ENCODE measurements at regions of chr15 and their contacts with region 1.

Region 1: DNA sequence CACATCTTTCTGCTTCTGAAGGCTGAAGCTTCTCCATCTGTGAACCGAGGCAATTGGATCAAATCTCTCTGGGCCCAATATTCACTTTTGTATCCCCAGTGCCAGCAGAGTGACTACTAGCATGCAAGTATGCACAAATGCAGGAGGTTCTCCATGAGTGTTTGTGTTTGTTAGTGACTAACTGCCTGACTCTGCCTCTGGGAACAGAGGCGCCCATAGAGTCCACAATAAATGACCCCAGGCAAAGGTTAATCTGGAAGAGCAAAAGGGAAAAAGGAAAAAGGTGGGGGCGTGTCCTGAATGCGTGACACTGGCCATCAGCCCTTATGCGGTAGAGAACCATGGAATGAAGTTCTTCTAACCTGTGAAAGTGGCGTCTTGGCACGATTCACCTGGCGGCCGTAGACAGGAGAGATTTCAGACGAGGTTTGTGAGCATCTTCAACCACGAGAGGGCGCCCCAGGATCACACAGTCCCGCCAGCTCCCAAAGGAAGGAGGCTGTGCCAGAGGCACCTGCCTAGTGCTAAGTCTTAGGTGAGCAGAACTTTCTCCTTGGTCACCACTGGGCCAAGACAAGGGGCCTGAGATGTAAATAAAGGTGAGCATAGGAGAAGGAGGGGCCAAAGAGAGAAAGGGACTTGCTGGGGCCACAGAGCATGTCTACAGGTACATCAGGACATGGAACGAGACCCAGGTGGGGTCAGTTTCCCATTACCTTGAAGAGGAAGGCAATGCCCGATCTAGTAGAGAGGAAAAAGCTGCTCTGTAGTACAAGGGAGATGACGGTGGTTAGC is 44.2 kb downstream of the RBPMS2 start:
- DNase-seq: peak; percentile 65 to 86 (median 77)
- ATAC-seq: peak; percentile 87
- H3K4me3 ChIP-seq: no peak overlapping the region
- H3K4me3 Mint-ChIP-seq: peak overlapping the region in 2 of 10 donors; percentile 4 to 46
- H3K27ac ChIP-seq: no peak overlapping the region
- H3K27ac Mint-ChIP-seq: peak overlapping the region in 1 of 9 donors; percentile 57
- H3K4me1 ChIP-seq: no peaks in the 10 kb centered on the region
- H3K4me1 Mint-ChIP-seq: peaks cover 8 to 12% (median 10%) of the 10 kb centered on the region in 7 donors
- H3K27me3 ChIP-seq: no peaks in the 10 kb centered on the region
- H3K27me3 Mint-ChIP-seq: peaks cover 0 to 5% (median 4%) of the 10 kb centered on the region in 5 donors

Region 2: GRCh38 chr15:64209680-64210334 is 521.4 kb before region 1 on chr15:
- CTCF ChIA-PET with region 1: no interaction called
- POLR2A ChIA-PET with region 1: no interaction called
- intact Hi-C with region 1: loop called in 1 of 2 experiments (anchors 1 kb)
- DNase-seq: peak in 3 of 9 donors; percentile 0 to 19 (median 11)
- ATAC-seq: no peak
- H3K4me3 ChIP-seq: no peak overlapping the region
- H3K4me3 Mint-ChIP-seq: no peak overlapping the region
- H3K27ac ChIP-seq: no peak overlapping the region
- H3K27ac Mint-ChIP-seq: peak overlapping the region in 1 of 9 donors; percentile 41
- H3K4me1 ChIP-seq: no peaks in the 10 kb centered on the region
- H3K4me1 Mint-ChIP-seq: peaks cover 0 to 10% (median 0%) of the 10 kb centered on the region in 7 donors
- H3K27me3 ChIP-seq: no peaks in the 10 kb centered on the region
- H3K27me3 Mint-ChIP-seq: no peaks in the 10 kb centered on the region

Region 3: GRCh38 chr15:64430000-64430735 is 301.0 kb before region 1 on chr15:
- CTCF ChIA-PET with region 1: interaction called, 10 read pairs
- POLR2A ChIA-PET with region 1: interaction called, 3 read pairs
- intact Hi-C with region 1: loop called in 1 of 2 experiments (anchors 1 kb)
- DNase-seq: peak in 8 of 9 donors; percentile 29 to 89 (median 81)
- ATAC-seq: peak; percentile 95
- H3K4me3 ChIP-seq: peak overlapping the region; percentile 15
- H3K4me3 Mint-ChIP-seq: peak overlapping the region; percentile 25 to 85 (median 80)
- H3K27ac ChIP-seq: peak overlapping the region; percentile 59
- H3K27ac Mint-ChIP-seq: peak overlapping the region; percentile 78 to 98 (median 93)
- H3K4me1 ChIP-seq: peaks cover 24 to 53% of the 10 kb centered on the region in 2 donors
- H3K4me1 Mint-ChIP-seq: peaks cover 25 to 66% (median 57%) of the 10 kb centered on the region in 7 donors
- H3K27me3 ChIP-seq: no peaks in the 10 kb centered on the region
- H3K27me3 Mint-ChIP-seq: no peaks in the 10 kb centered on the region

Region 4: GRCh38 chr15:64634576-64635498 is 96.4 kb before region 1 on chr15:
- CTCF ChIA-PET with region 1: no interaction called
- POLR2A ChIA-PET with region 1: no interaction called
- intact Hi-C with region 1: no loop called
- DNase-seq: peak in 1 of 9 donors; percentile 13
- ATAC-seq: peak; percentile 55
- H3K4me3 ChIP-seq: peak overlapping the region; percentile 5
- H3K4me3 Mint-ChIP-seq: peak overlapping the region; percentile 51 to 74 (median 68)
- H3K27ac ChIP-seq: peak overlapping the region; percentile 47
- H3K27ac Mint-ChIP-seq: peak overlapping the region; percentile 37 to 87 (median 82)
- H3K4me1 ChIP-seq: peaks cover 50 to 53% of the 10 kb centered on the region in 2 donors
- H3K4me1 Mint-ChIP-seq: peaks cover 51 to 86% (median 72%) of the 10 kb centered on the region in 7 donors
- H3K27me3 ChIP-seq: no peaks in the 10 kb centered on the region
- H3K27me3 Mint-ChIP-seq: no peaks in the 10 kb centered on the region

Region 5: DNA sequence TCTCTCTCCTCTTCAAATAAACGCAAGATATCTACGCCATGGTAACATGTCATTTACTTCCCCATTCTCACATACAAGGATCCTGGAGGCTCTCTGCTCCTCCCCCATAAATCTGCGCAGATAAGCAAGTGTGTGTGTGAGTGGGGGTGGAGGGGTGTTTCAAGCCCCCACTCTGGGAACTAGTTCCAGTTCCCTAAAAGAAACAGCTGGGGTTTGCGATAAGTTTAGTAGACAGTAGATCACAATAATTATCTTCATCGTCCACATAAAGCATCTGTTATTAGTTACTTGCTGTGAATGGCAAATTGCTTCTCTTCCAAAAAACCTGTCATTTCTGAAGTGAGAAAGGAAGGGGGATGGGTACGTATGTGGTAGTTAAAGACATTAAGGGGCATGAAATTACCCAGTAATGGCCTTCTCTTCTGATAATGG is 35.6 kb before region 1 on chr15:
- CTCF ChIA-PET with region 1: interaction called, 211 read pairs
- POLR2A ChIA-PET with region 1: no interaction called
- intact Hi-C with region 1: no loop called
- DNase-seq: no peak
- ATAC-seq: peak; percentile 58
- H3K4me3 ChIP-seq: no peak overlapping the region
- H3K4me3 Mint-ChIP-seq: no peak overlapping the region
- H3K27ac ChIP-seq: no peak overlapping the region
- H3K27ac Mint-ChIP-seq: peak overlapping the region in 7 of 9 donors; percentile 11 to 85 (median 39)
- H3K4me1 ChIP-seq: peaks cover 12 to 24% of the 10 kb centered on the region in 2 donors
- H3K4me1 Mint-ChIP-seq: peaks cover 37 to 73% (median 55%) of the 10 kb centered on the region in 7 donors
- H3K27me3 ChIP-seq: no peaks in the 10 kb centered on the region
- H3K27me3 Mint-ChIP-seq: no peaks in the 10 kb centered on the region

Region 6: DNA sequence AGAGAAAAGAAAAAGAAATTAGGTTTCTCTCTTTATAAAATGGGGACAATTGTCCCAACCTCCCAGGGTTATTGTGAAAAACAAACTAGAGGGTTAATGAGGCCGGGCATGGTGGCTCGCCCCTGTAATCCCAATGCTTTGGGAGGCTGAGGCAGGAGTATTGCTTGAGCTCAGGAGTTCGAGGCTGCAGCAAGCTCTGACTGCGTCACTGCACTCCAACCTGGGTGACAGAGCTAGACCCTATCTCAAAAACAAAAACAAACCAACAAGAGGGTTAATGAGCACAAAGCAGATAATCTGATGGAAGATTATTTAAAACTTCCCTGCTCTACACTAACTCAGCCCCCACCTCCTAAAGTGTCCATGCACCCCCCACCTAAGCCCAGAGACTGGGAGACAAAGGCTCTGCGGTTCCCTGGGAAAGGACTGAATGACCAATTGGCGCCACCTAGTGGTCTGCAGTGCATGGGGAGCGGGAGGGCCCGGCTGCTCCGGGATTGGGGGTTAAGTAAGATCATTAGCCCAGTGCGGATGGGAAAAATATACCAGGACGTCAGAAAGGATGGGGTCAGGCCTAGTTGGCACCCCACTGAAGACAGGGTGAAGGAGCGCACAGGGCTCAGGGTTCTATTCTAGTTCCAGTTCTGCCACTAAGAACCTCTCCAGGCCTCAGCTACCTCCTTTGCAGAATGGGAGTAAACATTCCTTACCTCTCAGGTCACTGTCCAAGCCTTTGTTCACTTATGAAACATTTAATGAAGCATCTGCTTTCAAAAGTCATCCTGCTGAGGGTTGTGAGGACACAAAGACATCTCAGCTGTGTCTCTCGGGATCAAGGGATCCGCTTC is 78.7 kb after region 1 on chr15:
- CTCF ChIA-PET with region 1: interaction called, 4 read pairs
- POLR2A ChIA-PET with region 1: no interaction called
- intact Hi-C with region 1: loop called (anchors 1 kb)
- DNase-seq: peak; percentile 21 to 75 (median 47)
- ATAC-seq: peak; percentile 80
- H3K4me3 ChIP-seq: no peak overlapping the region
- H3K4me3 Mint-ChIP-seq: no peak overlapping the region
- H3K27ac ChIP-seq: no peak overlapping the region
- H3K27ac Mint-ChIP-seq: no peak overlapping the region
- H3K4me1 ChIP-seq: peaks cover 0 to 3% of the 10 kb centered on the region in 2 donors
- H3K4me1 Mint-ChIP-seq: peaks cover 0 to 8% (median 4%) of the 10 kb centered on the region in 7 donors
- H3K27me3 ChIP-seq: no peaks in the 10 kb centered on the region
- H3K27me3 Mint-ChIP-seq: peaks cover 0 to 12% (median 0%) of the 10 kb centered on the region in 5 donors

Region 7: DNA sequence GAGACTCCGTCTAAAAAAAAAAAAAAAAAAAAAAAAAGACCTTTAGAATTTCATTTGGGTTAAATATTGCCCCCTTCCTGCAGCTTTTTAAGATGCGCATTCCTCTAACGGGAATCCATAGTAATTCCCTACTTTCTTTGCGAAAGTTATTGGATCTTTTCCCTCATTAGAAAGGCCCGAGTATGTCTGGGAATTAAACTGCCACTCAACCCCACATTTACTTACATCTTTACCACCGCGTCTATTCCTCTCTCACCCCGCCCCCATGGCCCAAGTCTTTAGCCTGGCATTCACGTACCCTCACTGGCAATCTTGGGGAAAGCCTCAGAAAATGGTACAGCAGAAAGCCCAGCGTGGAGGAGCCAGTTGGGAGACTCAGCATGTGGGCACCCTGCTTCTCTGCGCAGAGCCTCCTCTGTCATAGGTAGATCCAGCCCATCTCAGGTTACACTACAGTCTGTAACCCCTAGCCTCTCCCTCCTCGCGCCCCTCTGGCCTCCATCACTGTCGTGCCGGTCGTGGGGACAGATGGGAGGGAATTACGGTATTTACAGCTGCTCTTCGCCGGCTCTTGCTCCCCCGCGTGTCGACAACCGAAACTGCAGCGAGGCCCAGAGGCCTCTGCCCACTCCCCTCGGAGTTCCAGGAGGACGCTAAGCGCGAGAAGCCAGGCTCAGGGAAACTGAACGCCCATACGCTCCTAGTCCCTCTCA is 174.1 kb after region 1 on chr15:
- CTCF ChIA-PET with region 1: interaction called, 110 read pairs
- POLR2A ChIA-PET with region 1: interaction called, 3 read pairs
- intact Hi-C with region 1: loop called (anchors 1 kb)
- DNase-seq: peak; percentile 58 to 79 (median 72)
- ATAC-seq: peak; percentile 84
- H3K4me3 ChIP-seq: peak overlapping the region; percentile 38
- H3K4me3 Mint-ChIP-seq: peak overlapping the region; percentile 22 to 84 (median 74)
- H3K27ac ChIP-seq: no peak overlapping the region
- H3K27ac Mint-ChIP-seq: peak overlapping the region in 6 of 9 donors; percentile 3 to 78 (median 44)
- H3K4me1 ChIP-seq: peaks cover 17 to 21% of the 10 kb centered on the region in 2 donors
- H3K4me1 Mint-ChIP-seq: peaks cover 23 to 44% (median 41%) of the 10 kb centered on the region in 7 donors
- H3K27me3 ChIP-seq: no peaks in the 10 kb centered on the region
- H3K27me3 Mint-ChIP-seq: peaks cover 0 to 14% (median 7%) of the 10 kb centered on the region in 5 donors

Region 8: GRCh38 chr15:65304389-65305144 is 573.4 kb after region 1 on chr15 and contains the start of gene RNU5B-1:
- CTCF ChIA-PET with region 1: no interaction called
- POLR2A ChIA-PET with region 1: interaction called, 3 read pairs
- intact Hi-C with region 1: loop called in 1 of 2 experiments (anchors 5 kb)
- DNase-seq: peak; percentile 40 to 94 (median 88)
- ATAC-seq: peak; percentile 89
- H3K4me3 ChIP-seq: peak within 1 kb of the TSS; percentile 60
- H3K4me3 Mint-ChIP-seq: peak within 1 kb of the TSS; percentile 91 to 99 (median 97)
- H3K27ac ChIP-seq: peak within 1 kb of the TSS; percentile 83
- H3K27ac Mint-ChIP-seq: peak within 1 kb of the TSS; percentile 96 to 100 (median 99)
- H3K4me1 ChIP-seq: peaks cover 0 to 9% of the 10 kb centered on the region in 2 donors
- H3K4me1 Mint-ChIP-seq: peaks cover 4 to 35% (median 31%) of the 10 kb centered on the region in 7 donors
- H3K27me3 ChIP-seq: no peaks in the 10 kb centered on the region
- H3K27me3 Mint-ChIP-seq: peaks cover 0 to 11% (median 0%) of the 10 kb centered on the region in 5 donors
- total RNA-seq, gene RNU5B-1: 18.9 TPM in 1 of 5 experiments, not detected in the others

Measured in naive thymus-derived CD4-positive, alpha-beta T cell (primary cell).